ENCODE measurements at regions of chrX and their contacts with region 1.

Region 1: DNA sequence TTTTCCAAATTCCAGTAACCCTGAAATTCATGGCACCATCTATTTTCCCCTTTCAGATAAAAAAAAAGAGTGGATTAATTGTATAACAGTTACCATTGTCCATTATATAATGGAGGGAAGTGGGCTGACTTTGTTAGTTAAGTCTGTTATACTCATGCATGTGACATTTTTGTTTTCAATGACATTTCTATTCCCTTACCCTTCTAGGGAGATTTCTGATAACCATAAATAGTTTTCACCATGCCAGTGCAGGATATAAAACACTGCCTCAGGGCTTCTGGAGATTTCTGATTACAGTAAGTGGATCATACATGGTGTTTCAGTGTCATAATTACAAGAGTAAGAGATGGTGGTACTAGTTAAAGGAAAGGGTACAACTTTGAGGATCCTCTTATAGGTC is 45.5 kb downstream of the SUPT20HL1 start:
- DNase-seq: no peak
- H3K4me3 ChIP-seq: no peak overlapping the region
- CTCF ChIP-seq: no peak

Region 2: GRCh38 chrX:24332878-24333277 is 73.1 kb before region 1 on chrX:
- in situ Hi-C with region 1: loop called (anchors 5 kb)
- DNase-seq: peak; percentile 29
- H3K4me3 ChIP-seq: no peak overlapping the region
- CTCF ChIP-seq: no peak

Region 3: DNA sequence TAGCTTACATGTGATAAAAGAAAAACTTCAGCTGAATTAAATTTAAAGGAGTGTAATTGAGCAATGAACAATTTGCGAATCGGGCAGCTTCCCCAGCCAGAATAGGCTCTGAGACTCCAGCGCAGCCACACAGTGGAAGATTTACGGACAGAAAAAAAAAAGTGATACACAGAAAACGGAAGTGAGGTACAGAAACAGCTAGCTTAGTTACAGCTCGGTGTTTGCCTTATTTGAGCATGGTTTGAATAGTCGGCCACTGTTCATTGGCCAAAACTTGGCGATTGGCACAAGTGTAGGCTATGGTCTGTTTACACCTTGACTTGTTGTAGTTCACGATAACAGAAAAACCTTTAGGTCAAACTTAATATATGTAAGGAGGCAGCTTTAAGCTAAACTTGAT is 62.2 kb before region 1 on chrX:
- in situ Hi-C with region 1: no loop called
- DNase-seq: no peak
- H3K4me3 ChIP-seq: no peak overlapping the region
- CTCF ChIP-seq: no peak

Region 4: GRCh38 chrX:24371391-24371972 is 34.5 kb before region 1 on chrX:
- in situ Hi-C with region 1: no loop called
- DNase-seq: peak; percentile 49
- H3K4me3 ChIP-seq: peak overlapping the region; percentile 2
- CTCF ChIP-seq: peak; percentile 69

Region 5: GRCh38 chrX:24435060-24435459 is 29.1 kb after region 1 on chrX:
- in situ Hi-C with region 1: no loop called
- DNase-seq: no peak
- H3K4me3 ChIP-seq: no peak overlapping the region
- CTCF ChIP-seq: no peak